ENCODE measurements at regions of chr1 and their contacts with region 1.

Region 1: GRCh38 chr1:32773018-32773763 is 44.0 kb downstream of the YARS1 start:
- DNase-seq: peak; percentile 95
- H3K4me3 ChIP-seq: no peak overlapping the region
- H3K27ac ChIP-seq: peak overlapping the region; percentile 2 to 61 (median 40)
- H3K4me1 ChIP-seq: peaks cover 4 to 45% (median 28%) of the 10 kb centered on the region in 4 donors
- H3K27me3 ChIP-seq: no peaks in the 10 kb centered on the region
- CTCF ChIP-seq: peak in 2 of 3 experiments; percentile 96 to 97
- EP300 ChIP-seq: no peak
- POLR2A ChIP-seq: no peak

Region 2: DNA sequence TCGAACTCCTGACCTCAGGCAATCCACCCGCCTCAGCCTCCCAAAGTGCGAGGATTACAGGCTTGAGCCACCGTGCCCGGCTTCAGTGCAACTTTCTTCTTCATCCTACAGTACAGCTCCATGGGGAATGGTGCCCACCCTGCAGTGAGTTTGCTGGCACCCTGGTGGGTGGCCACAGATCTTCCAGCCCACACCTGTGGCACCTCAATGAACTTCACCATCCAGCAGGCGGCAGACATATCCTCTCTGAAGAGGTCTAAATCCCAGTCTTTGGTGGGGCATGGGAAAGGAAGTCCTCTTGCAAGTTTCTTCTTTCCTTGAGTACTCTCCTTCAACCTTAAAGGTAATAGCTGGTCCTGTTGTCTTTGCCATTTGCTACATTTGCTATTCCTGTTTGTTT is 252.0 kb before region 1 on chr1:
- intact Hi-C with region 1: loop called (anchors 10 kb)
- DNase-seq: no peak
- H3K4me3 ChIP-seq: no peak overlapping the region
- H3K27ac ChIP-seq: no peak overlapping the region
- H3K4me1 ChIP-seq: peaks cover 0 to 13% (median 9%) of the 10 kb centered on the region in 4 donors
- H3K27me3 ChIP-seq: no peaks in the 10 kb centered on the region
- CTCF ChIP-seq: no peak
- EP300 ChIP-seq: no peak
- POLR2A ChIP-seq: no peak

Region 3: DNA sequence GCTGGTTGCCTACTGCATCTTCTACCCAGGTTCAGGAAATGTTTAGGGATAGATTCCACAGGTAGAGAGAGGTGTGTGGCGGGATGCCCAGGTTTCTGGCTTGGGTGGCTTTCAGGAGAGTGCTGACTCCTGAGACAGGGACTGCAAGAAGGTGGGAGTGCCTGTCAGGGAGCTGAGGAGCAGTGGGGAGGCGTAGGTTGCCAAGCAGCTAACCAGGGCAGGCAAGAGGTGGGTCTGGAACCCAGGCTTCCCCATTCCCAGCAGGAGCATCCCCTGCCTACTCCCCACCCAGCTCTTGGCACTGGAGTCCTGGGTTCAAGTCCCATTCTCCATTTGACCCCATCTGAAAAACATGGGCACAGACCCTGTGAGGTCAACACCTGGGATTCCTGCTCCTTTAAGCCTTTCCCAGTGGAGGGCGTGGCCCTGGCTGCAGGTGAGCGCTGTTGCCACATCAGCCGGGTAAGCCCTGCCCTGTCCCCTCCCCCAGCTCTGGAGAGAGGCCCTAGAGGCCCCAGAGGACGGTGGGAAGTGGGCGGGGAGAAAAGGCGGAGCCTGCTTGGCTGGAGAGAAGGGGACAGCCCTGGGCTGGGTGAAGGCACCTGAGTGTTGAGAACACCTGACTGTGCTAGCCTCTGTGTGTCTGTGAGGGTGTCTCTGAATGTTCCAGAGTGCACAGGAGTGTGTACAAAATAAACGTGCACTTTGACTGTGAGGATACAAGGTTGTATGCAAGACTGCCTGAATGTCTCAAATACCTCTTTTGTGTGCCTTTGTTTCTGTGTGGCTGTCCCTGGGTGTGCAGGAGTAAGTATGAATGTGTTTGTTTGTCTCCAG is 56.7 kb before region 1 on chr1:
- intact Hi-C with region 1: loop called (anchors 1 kb)
- DNase-seq: no peak
- H3K4me3 ChIP-seq: no peak overlapping the region
- H3K27ac ChIP-seq: no peak overlapping the region
- H3K4me1 ChIP-seq: peaks cover 4 to 18% (median 9%) of the 10 kb centered on the region in 4 donors
- H3K27me3 ChIP-seq: no peaks in the 10 kb centered on the region
- CTCF ChIP-seq: no peak
- EP300 ChIP-seq: no peak
- POLR2A ChIP-seq: no peak